ENCODE measurements at regions of chrX and their contacts with region 1.

Region 1: GRCh38 chrX:153646620-153647373 is at the start of gene DUSP9:
- DNase-seq: peak; percentile 38
- H3K4me3 ChIP-seq: no peak within 1 kb of the TSS
- H3K27ac ChIP-seq: no peak within 1 kb of the TSS
- H3K4me1 ChIP-seq: no peaks in the 10 kb centered on the region
- H3K27me3 ChIP-seq: peaks cover 26% of the 10 kb centered on the region
- CTCF ChIP-seq: no peak
- total RNA-seq, gene DUSP9: 0.92 and 1.4 TPM in 2 replicates

Region 2: DNA sequence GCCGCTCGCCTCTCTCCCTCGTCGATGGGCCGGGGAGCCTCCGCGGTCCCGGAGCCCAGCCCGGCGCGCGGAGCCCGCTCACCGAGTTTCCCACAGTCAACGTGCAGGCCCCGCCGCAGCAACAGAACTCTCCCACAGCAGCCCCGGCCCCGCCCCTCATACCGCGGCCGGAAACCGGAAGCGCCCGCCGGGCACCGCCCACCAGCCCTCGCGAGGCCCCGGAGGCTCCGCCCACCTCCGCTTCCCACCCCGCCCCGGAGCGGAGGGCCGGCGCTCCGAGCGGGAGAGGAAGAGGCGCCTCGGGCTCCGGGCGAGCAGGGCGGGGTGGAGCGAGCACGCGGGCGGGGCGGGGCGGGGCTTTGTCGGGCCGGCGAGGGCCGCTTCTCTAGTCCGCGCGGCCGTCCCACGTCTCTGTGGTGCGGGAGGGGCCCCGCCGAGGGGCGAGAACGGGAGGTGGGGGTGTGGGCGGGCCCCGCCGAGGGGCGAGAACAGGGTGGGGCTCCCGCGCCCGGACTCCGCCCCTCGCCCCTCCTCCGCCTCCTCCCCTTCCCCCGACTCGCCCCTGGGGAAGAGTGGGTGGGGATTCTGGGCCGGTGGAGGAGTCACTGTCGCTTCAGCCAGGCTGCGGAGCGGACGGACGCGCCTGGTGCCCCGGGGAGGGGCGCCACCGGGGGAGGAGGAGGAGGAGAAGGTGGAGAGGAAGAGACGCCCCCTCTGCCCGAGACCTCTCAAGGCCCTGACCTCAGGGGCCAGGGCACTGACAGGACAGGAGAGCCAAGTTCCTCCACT is 77.6 kb after region 1 on chrX and contains the starts of genes ABCD1 and BCAP31:
- CTCF ChIA-PET with region 1: no interaction called
- POLR2A ChIA-PET with region 1: no interaction called
- intact Hi-C with region 1: loop called (anchors 2 kb)
- DNase-seq: peak; percentile 92
- H3K4me3 ChIP-seq: peak within 1 kb of the TSS; percentile 71
- H3K27ac ChIP-seq: peak within 1 kb of the TSS; percentile 81
- H3K4me1 ChIP-seq: peaks cover 8% of the 10 kb centered on the region
- H3K27me3 ChIP-seq: no peaks in the 10 kb centered on the region
- CTCF ChIP-seq: no peak
- total RNA-seq, gene ABCD1: 7.8 and 8.0 TPM in 2 replicates
- total RNA-seq, gene BCAP31: 219 and 235 TPM in 2 replicates

Region 3: DNA sequence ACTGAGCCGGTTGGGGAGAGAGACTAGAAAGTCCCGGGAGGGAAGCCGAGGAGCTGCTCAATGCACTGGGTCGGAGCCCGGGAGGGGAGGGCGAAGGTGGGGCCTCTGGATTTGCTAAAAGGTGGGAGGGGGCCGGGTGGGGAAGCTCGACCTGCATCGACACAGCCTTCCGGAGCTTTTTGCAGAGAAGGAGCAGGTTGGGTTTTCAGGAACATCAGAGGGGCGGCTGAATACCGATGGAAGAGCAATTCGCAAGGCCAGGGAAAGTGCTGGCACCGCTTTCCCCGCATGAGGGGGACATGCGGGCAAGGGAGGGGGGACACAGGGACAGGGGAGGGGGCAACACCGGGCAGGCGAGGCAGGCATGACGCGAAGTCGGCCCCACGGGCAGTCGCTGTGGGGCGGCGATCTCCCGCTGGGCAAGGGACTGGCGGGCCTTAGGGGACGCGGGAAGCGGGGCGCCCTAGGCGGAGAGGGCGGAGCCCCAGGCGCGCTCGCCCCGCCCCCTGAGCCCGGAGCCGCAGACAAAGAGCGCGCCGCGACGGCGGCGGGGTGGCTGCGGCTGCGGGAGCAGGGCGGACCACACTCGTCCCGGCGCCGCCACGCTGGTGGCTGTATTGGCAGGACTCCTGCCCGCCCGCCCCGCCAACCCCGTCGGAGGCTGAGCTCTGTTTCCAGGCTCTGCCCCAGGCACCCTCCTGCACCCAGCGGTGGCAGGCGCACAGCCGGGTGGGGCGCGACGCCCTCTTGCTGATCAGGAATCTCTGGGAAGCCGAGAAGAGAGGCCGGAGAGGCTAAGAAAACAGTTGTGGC is 172.0 kb after region 1 on chrX:
- CTCF ChIA-PET with region 1: no interaction called
- POLR2A ChIA-PET with region 1: interaction called, 16 read pairs
- intact Hi-C with region 1: no loop called
- DNase-seq: peak; percentile 61
- H3K4me3 ChIP-seq: peak overlapping the region; percentile 41
- H3K27ac ChIP-seq: peak overlapping the region; percentile 50
- H3K4me1 ChIP-seq: no peaks in the 10 kb centered on the region
- H3K27me3 ChIP-seq: no peaks in the 10 kb centered on the region
- CTCF ChIP-seq: no peak